H1 (cell line): ENCODE measurements at regions of chr2 and their contacts with region 1.

Region 1: GRCh38 chr2:61898810-61899209 is 6.7 kb upstream of the COMMD1 start:
- DNase-seq: no peak
- H3K4me3 ChIP-seq: no peak overlapping the region
- H3K27ac ChIP-seq: no peak overlapping the region
- H3K4me1 ChIP-seq: no peaks in the 10 kb centered on the region
- H3K27me3 ChIP-seq: no peaks in the 10 kb centered on the region
- CTCF ChIP-seq: peak in 1 of 3 experiments; percentile 52; a peak in 2 of 4 replicates
- EP300 ChIP-seq: no peak
- POLR2A ChIP-seq: no peak
- RAD21 ChIP-seq: peak; percentile 43 to 52; a peak in 3 of 4 replicates

Region 2: GRCh38 chr2:61811821-61812220 is 87.0 kb before region 1 on chr2:
- CTCF ChIA-PET with region 1: no interaction called
- POLR2A ChIA-PET with region 1: no interaction called
- DNase-seq: no peak
- H3K4me3 ChIP-seq: no peak overlapping the region
- H3K27ac ChIP-seq: no peak overlapping the region
- H3K4me1 ChIP-seq: no peaks in the 10 kb centered on the region
- H3K27me3 ChIP-seq: no peaks in the 10 kb centered on the region
- CTCF ChIP-seq: no peak
- EP300 ChIP-seq: no peak
- POLR2A ChIP-seq: no peak
- RAD21 ChIP-seq: no peak

Region 3: GRCh38 chr2:61888267-61889055 is 10.3 kb before region 1 on chr2 and contains the start of gene CCT4:
- CTCF ChIA-PET with region 1: interaction called, 4 read pairs
- POLR2A ChIA-PET with region 1: interaction called, 11 read pairs
- DNase-seq: peak; percentile 46 to 99
- H3K4me3 ChIP-seq: peak within 1 kb of the TSS; percentile 96 to 100 (median 98)
- H3K27ac ChIP-seq: peak within 1 kb of the TSS; percentile 97
- H3K4me1 ChIP-seq: peaks cover 0 to 2% (median 0%) of the 10 kb centered on the region in 4 experiments; a peak in 3 of 7 replicates
- H3K27me3 ChIP-seq: no peaks in the 10 kb centered on the region
- CTCF ChIP-seq: no peak
- EP300 ChIP-seq: no peak
- POLR2A ChIP-seq: peak; percentile 98 to 99
- RAD21 ChIP-seq: no peak; a peak in 1 of 4 replicates
- total RNA-seq, gene CCT4: 342 and 359 TPM in 2 replicates

Region 4: DNA sequence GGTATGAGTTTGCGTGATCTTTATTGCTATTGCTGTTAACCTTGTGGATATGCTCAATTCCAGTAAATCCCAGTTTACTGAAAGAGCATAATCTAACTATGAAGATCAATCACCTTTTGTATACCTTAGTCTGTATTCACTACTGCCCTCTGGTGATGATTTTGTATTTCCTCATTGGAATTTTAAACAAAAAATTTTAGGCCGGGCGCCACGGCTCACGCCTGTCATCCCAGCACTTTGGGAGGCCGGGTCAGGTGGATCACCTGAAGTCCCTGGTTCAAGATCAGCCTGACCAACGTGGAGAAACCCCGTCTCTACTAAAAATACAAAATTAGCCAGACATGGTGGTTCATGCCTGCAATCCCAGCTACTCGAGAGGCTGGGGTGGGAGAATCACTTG is 11.8 kb after region 1 on chr2:
- CTCF ChIA-PET with region 1: interaction called, 17 read pairs
- POLR2A ChIA-PET with region 1: no interaction called
- DNase-seq: no peak
- H3K4me3 ChIP-seq: no peak overlapping the region
- H3K27ac ChIP-seq: no peak overlapping the region
- H3K4me1 ChIP-seq: no peaks in the 10 kb centered on the region
- H3K27me3 ChIP-seq: no peaks in the 10 kb centered on the region
- CTCF ChIP-seq: peak in 1 of 3 experiments; percentile 23; a peak in 1 of 4 replicates
- EP300 ChIP-seq: no peak
- POLR2A ChIP-seq: no peak
- RAD21 ChIP-seq: peak in 1 of 2 experiments; percentile 8; a peak in 1 of 4 replicates